Body of pancreas (tissue), 4 donors: ENCODE measurements at regions of chr11 and their contacts with region 1.

Region 1: DNA sequence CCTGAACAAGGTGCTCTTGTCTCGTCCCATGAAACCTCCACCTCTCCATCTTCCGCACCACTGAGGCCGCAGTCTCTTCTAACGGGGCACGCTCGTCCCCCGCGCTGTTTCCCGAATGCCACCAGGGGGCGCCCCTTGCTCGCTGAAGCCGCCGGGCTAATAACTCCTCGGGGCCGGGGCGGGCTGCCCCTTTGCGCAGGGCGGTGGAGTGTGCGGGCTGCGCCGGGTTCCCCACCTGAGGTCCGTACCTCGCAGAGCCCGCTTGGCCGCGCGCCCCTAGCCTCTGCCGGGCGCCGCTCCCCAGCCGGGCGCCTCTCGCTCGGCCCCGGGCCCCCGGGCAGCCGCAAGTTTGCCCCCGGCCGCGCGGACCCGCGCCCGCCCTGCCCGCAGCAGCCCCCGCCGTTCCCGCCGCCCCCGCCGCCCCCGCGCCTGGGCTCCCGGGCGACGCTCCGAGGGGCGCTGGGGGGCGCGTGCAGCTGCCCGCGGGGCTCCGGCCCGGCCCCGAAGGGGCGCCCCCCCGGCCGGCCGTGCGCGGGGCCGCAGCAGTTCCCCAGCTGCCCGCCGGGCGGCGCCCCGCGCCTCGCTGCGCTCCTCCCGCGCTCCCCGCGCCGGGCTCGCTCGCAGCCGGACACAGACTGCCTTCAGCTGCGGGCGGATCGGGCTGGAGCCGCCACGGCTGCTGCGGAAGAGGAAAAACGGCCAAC is at the start of gene GRIK4:
- DNase-seq: peak; percentile 79 to 85 (median 82)
- ATAC-seq: peak; percentile 90
- H3K4me3 ChIP-seq: no peak within 1 kb of the TSS
- H3K27ac ChIP-seq: no peak within 1 kb of the TSS
- H3K4me1 ChIP-seq: no peaks in the 10 kb centered on the region
- H3K27me3 ChIP-seq: no peaks in the 10 kb centered on the region
- CTCF ChIP-seq: peak; percentile 84 to 96 (median 93)
- POLR2A ChIP-seq: no peak
- total RNA-seq, gene GRIK4: not detected

Region 2: DNA sequence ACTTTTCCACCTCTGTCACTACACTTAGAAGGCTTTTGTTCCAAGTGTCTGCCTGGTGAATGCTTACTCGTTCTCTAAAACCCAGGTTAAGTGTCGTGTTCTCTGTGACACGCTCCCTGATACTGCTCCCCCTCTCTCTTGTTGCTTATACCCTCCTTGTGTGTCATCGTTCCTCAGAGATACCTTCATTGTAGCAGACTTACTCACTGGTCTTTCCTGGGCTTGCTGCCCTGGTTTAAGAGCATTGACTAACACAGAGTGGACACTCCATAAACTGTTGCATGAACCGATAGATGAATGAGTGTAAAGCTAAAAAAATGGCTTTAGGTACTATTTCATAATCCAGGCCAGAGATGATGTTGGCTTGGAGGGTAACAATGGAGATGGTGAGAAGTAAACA is 171.6 kb after region 1 on chr11:
- intact Hi-C with region 1: loop called (anchors 5 kb)
- DNase-seq: no peak
- ATAC-seq: no peak
- H3K4me3 ChIP-seq: no peak overlapping the region
- H3K27ac ChIP-seq: no peak overlapping the region
- H3K4me1 ChIP-seq: no peaks in the 10 kb centered on the region
- H3K27me3 ChIP-seq: no peaks in the 10 kb centered on the region
- CTCF ChIP-seq: no peak
- POLR2A ChIP-seq: no peak

Region 3: DNA sequence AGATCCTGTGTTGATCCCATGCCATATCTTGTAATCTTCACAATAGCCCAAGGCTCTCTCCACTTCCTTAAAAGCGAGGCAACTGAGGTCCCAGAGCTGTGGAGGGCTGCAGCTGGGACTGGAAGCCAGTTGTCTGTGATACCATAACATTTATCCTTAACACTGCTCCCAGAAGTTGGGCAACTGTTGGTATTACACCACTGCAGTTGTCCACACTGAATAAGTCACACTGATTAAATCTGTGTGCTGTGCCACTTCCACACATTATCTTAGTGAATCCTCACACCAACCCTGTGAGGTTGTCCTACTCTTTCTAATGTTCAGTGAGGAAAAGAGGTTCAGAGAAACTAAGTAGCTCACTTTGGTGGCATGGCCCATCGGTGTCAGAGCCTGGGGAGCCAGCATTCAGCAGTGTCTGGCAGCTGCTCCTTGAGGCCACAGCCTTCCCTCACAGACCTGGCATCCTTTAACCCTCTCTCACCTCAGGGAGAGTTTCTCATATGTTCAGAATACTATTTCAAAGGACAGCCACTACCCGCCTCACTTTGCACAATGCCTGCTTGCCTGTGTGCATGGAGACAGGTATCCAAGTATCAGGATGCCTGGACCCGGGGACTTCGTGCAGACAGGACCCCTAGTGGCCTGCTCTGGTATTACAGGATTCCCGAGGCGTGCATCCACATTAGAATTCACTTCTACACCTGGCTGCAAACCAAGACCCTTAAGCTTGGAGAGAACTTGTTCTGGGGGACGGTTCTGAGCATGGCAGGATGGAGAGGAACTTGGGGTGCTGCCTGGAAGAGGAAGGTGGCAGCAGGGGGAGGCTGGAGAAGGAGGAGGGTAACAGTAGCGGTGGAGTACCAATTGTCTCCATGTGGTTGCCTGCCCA is 290.8 kb after region 1 on chr11:
- intact Hi-C with region 1: loop called (anchors 5 kb)
- DNase-seq: peak; percentile 55 to 74 (median 60)
- ATAC-seq: peak; percentile 50
- H3K4me3 ChIP-seq: no peak overlapping the region
- H3K27ac ChIP-seq: no peak overlapping the region
- H3K4me1 ChIP-seq: no peaks in the 10 kb centered on the region
- H3K27me3 ChIP-seq: no peaks in the 10 kb centered on the region
- CTCF ChIP-seq: peak; percentile 70 to 92 (median 75)
- POLR2A ChIP-seq: no peak

Region 4: DNA sequence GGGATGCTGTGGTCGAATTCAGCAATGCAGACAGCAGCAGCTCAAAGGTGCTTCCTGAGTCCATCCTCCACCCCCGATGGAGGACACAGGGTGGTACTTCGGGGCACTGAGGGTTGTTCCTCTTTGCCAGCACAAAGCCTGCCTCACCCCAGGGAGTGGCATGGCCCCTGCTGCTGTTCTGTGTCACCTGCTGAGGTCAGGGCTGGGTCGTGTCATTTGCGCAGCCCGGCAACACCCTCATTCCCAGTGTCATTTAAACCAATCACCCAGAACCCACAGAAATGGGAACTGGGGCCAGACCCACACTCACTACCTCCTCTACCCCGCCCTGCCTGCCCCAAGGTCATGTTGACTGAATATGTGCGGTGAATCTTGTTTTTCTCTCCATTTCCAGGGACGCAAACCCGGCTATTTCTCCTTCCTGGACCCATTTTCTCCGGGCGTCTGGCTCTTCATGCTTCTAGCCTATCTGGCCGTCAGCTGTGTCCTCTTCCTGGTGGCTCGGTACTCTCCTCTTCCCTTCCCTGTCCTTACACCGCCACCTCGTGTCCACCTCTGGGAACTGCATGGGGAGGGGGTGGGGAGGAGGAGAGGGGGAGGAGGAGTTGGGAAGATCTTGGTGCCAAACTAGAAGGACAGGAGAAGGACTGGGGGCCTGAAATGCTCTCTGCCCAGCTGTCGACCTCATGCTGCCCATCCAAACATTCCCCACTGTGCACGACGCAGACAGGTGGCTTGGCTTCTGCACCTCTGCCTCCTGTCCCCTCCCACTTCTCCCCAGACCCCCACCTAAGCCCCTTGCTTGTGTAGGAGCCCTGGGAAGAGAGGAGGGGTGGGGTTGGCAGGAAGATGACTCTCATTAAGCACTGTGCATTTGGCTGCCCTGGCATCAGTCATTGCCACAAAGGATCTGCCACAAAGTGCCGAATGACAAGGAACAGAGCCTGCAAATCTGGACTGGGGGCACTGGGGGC is 441.5 kb after region 1 on chr11:
- intact Hi-C with region 1: loop called (anchors 10 kb)
- DNase-seq: peak; percentile 70 to 78 (median 74)
- ATAC-seq: peak; percentile 82
- H3K4me3 ChIP-seq: no peak overlapping the region
- H3K27ac ChIP-seq: no peak overlapping the region
- H3K4me1 ChIP-seq: peaks cover 4% of the 10 kb centered on the region
- H3K27me3 ChIP-seq: no peaks in the 10 kb centered on the region
- CTCF ChIP-seq: peak; percentile 59 to 89 (median 78)
- POLR2A ChIP-seq: no peak